Activated B cell treated with CpG ODN at 0.5 μM for 24 hours (primary cell): ENCODE measurements at regions of chr12 and their contacts with region 1.

Region 1: DNA sequence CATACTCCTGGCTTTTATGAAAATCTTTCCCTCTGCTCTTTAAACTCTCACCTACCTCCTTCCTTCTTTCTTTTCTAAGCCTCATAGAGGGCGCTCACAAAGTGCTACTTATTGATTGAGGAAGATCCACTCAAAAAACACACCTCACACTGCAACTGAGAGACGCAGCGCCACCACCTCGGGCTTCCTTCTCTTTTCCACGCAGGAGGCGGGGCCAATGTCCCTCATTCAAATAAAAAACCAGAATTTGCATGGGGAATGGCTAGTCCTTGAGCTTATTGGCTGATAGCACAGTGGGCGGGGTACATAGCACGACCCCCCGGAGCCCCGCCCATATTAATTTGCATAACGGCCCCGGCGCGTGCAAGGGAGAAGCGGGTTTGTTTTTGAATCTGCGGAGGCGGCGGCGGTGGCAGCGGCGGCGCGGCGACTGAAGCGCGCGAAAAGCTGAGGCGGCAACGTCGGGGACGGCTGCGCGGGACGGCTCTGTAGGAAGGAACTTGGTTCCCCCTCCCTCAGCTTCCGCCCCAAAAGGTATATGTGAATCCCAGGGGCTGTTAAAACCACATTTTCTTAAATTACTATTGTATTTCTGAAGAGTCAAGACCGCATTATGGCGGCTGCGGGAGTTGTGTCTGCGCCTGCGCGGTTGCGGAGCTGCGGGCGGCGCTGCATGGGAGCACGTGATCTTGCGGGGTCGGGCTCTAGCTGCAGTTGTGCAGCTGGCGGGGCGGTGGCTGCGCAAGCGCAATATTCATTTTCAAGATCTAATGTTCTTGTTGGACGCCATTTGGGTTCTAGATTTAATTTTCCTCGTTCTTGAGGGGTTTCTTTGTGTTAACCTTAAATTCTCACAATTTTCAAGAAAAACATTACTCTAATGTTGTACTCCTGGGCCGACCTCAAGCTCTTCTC is at the start of gene ATF7IP:
- DNase-seq: peak; percentile 89
- ATAC-seq: peak; percentile 83
- H3K4me3 Mint-ChIP-seq: peak within 1 kb of the TSS; percentile 87
- H3K27ac Mint-ChIP-seq: peak within 1 kb of the TSS; percentile 97
- H3K4me1 Mint-ChIP-seq: peaks cover 64% of the 10 kb centered on the region
- H3K27me3 Mint-ChIP-seq: no peaks in the 10 kb centered on the region
- CTCF ChIP-seq: no peak
- total RNA-seq, gene ATF7IP: 142 and 153 TPM in 2 replicates

Region 2: GRCh38 chr12:13534645-13535398 is 830.7 kb before region 1 on chr12:
- CTCF ChIA-PET with region 1: no interaction called
- POLR2A ChIA-PET with region 1: no interaction called
- intact Hi-C with region 1: loop called (anchors 5 kb)
- DNase-seq: peak; percentile 24
- ATAC-seq: no peak
- H3K4me3 Mint-ChIP-seq: no peak overlapping the region
- H3K27ac Mint-ChIP-seq: no peak overlapping the region
- H3K4me1 Mint-ChIP-seq: peaks cover 48% of the 10 kb centered on the region
- H3K27me3 Mint-ChIP-seq: no peaks in the 10 kb centered on the region
- CTCF ChIP-seq: no peak

Region 3: GRCh38 chr12:14239350-14239934 is 126.1 kb before region 1 on chr12:
- CTCF ChIA-PET with region 1: interaction called, 58 read pairs
- POLR2A ChIA-PET with region 1: interaction called, 105 read pairs
- intact Hi-C with region 1: loop called (anchors 1 kb)
- DNase-seq: peak; percentile 48
- ATAC-seq: peak; percentile 82
- H3K4me3 Mint-ChIP-seq: peak overlapping the region; percentile 82
- H3K27ac Mint-ChIP-seq: peak overlapping the region; percentile 99
- H3K4me1 Mint-ChIP-seq: peaks cover 42% of the 10 kb centered on the region
- H3K27me3 Mint-ChIP-seq: no peaks in the 10 kb centered on the region
- CTCF ChIP-seq: no peak

Region 4: GRCh38 chr12:14284184-14284722 is 81.3 kb before region 1 on chr12:
- CTCF ChIA-PET with region 1: interaction called, 13 read pairs
- POLR2A ChIA-PET with region 1: interaction called, 50 read pairs
- intact Hi-C with region 1: loop called (anchors 1 kb)
- DNase-seq: no peak
- ATAC-seq: peak; percentile 36
- H3K4me3 Mint-ChIP-seq: peak overlapping the region; percentile 67
- H3K27ac Mint-ChIP-seq: peak overlapping the region; percentile 96
- H3K4me1 Mint-ChIP-seq: peaks cover 46% of the 10 kb centered on the region
- H3K27me3 Mint-ChIP-seq: no peaks in the 10 kb centered on the region
- CTCF ChIP-seq: no peak

Region 5: GRCh38 chr12:14394317-14395073 is 28.9 kb after region 1 on chr12:
- CTCF ChIA-PET with region 1: interaction called, 10 read pairs
- POLR2A ChIA-PET with region 1: interaction called, 43 read pairs
- intact Hi-C with region 1: loop called (anchors 1 kb)
- DNase-seq: no peak
- ATAC-seq: peak; percentile 75
- H3K4me3 Mint-ChIP-seq: peak overlapping the region; percentile 77
- H3K27ac Mint-ChIP-seq: peak overlapping the region; percentile 90
- H3K4me1 Mint-ChIP-seq: peaks cover 82% of the 10 kb centered on the region
- H3K27me3 Mint-ChIP-seq: no peaks in the 10 kb centered on the region
- CTCF ChIP-seq: no peak

Region 6: GRCh38 chr12:14591719-14592118 is 226.2 kb after region 1 on chr12:
- CTCF ChIA-PET with region 1: no interaction called
- POLR2A ChIA-PET with region 1: no interaction called
- intact Hi-C with region 1: no loop called
- DNase-seq: no peak
- ATAC-seq: no peak
- H3K4me3 Mint-ChIP-seq: no peak overlapping the region
- H3K27ac Mint-ChIP-seq: no peak overlapping the region
- H3K4me1 Mint-ChIP-seq: no peaks in the 10 kb centered on the region
- H3K27me3 Mint-ChIP-seq: no peaks in the 10 kb centered on the region
- CTCF ChIP-seq: no peak

Region 7: DNA sequence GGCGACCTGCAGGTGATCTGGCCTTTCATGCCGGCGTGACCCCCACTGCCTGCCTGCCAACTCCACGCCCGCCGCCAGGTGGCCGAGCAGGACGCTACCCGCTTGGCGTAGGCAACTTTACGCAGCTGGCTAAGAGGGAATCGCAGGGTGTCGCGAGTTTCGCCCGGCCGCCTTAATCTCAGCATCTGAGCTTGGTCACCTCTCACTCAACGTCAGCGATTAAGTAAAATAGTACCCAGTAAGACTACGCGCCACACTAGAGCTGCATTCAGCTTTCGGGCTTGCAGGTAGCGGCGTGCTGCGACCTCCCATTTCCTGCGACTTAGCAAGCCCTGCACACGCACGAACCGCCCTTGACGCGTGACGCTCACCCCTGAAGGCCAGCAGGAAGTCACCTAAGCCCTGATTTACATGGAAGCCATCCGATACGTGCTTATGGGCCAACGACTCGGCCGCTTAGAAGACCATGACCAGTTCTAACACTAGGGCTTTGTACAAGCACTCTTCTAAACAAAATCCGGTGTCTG is 404.5 kb after region 1 on chr12:
- CTCF ChIA-PET with region 1: no interaction called
- POLR2A ChIA-PET with region 1: interaction called, 33 read pairs
- intact Hi-C with region 1: loop called (anchors 1 kb)
- DNase-seq: peak; percentile 91
- ATAC-seq: peak; percentile 56
- H3K4me3 Mint-ChIP-seq: peak overlapping the region; percentile 98
- H3K27ac Mint-ChIP-seq: peak overlapping the region; percentile 99
- H3K4me1 Mint-ChIP-seq: peaks cover 61% of the 10 kb centered on the region
- H3K27me3 Mint-ChIP-seq: no peaks in the 10 kb centered on the region
- CTCF ChIP-seq: no peak